ENCODE measurements at regions of chr12 and their contacts with region 1.

Region 1: GRCh38 chr12:1650260-1650977 is 21.4 kb downstream of the WNT5B start:
- DNase-seq: no peak
- ATAC-seq: peak; percentile 78 to 85

Region 2: GRCh38 chr12:884746-885414 is 765.5 kb before region 1 on chr12:
- intact Hi-C with region 1: no loop called
- DNase-seq: no peak
- ATAC-seq: no peak

Region 3: DNA sequence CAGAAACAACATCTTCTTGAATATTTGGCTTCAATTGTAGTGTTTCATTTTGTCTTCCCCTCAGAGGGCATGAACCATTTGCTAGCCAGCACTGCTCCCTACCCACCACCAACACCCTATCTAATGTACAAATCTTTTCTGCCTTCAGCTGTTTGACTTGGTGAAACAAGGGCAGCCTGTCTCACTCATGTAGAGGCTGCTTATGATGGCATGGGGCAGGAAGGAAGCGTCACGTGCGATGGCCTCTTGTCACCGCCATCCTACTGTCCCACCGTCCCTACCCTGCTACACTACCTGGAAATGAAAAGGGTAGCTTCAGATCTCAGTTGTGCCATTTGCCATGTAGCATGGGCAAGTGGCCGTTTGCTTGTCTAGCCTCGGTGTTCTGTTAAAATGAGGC is 140.0 kb after region 1 on chr12:
- intact Hi-C with region 1: loop called (anchors 1 to 5 kb)
- DNase-seq: no peak
- ATAC-seq: no peak

Region 4: GRCh38 chr12:1795785-1796514 is 145.5 kb after region 1 on chr12:
- intact Hi-C with region 1: loop called in 1 of 2 experiments (anchors 5 kb)
- DNase-seq: peak; percentile 96
- ATAC-seq: peak; percentile 95 to 97

Region 5: DNA sequence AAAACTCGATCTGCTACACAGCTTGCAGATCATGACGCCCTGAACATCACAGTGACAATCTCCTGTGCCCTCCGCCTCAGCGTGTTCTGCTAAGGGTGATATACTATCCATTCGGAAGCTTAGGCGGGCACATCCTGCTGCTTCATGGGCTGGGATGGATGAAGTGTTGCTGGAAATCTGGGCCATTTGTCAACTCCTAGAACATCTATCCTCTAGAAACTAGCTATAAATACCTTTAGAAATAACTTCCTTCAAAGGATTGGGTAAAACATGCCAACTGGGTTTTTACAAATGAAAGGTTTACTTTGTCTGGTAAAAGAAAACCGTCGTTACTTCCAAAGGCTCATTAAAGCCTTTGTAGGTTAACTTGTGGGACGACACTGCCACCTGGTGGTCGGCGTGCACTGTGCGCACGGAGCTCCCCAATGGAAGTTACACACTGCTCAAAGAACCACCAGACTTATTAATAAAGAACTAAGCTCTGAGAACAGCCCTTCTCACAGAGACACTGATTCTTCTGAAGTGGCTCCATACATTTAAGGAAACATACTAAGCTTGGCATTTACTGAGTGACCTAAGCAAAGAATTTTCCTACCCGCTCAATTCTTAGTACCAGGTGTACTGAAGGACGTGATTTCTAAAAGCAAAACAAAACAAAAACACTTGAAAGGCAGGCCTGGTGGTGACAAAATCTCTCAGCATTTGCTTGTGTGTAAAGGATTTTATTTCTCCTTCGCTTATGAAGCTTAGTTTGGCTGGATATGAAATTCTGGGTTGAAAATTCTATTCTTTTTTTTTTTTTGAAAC is 289.6 kb after region 1 on chr12:
- intact Hi-C with region 1: loop called (anchors 2 to 5 kb)
- DNase-seq: peak; percentile 85
- ATAC-seq: peak; percentile 78